PC-9 (cell line): ENCODE measurements at regions of chr1 and their contacts with region 1.

Region 1: DNA sequence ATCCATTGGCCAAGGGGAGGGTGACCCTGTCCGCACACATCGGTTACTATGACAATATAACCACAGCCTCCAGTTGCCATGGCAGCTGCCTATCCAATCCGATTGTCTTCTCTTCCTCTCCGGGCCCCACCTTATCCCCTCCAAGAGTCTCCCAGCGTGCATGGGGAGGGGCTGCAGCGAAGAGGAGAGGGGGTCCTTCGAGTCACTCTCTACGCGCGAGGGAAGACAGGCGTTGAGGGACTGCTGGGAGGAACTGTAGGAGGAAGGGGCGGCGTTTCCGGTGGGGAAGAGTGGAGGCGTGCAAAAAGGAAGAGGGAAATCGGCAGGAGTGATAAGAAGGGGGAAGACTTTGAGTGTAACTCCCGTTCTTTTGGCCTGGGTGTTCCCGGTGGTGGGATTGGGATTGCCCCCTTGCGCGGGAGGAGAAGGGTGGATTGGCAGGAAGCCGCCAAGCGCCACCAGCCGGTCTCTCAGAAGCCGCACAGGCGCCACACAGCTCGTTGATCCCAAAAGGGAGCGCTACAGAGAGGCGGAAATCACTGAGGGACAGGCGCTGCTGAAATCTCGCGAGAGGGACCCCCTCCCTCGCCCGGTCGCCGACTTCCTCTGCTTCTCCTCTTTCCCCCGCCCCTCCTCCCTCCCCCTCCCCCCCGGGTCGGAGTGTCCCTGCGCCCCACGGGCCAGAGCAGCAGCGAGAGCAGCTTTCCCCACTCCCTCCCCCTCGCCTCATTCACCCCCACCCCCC is 384 bp upstream of the SMG7 start:
- DNase-seq: peak; percentile 84 to 92
- H3K4me3 ChIP-seq: peak overlapping the region; percentile 82
- H3K27ac ChIP-seq: peak overlapping the region; percentile 94
- H3K4me1 ChIP-seq: peaks cover 59% of the 10 kb centered on the region
- H3K27me3 ChIP-seq: no peaks in the 10 kb centered on the region
- CTCF ChIP-seq: no peak; the same call in 1 of the 2 replicates

Region 2: GRCh38 chr1:183234660-183235476 is 237.0 kb before region 1 on chr1:
- CTCF ChIA-PET with region 1: no interaction called
- POLR2A ChIA-PET with region 1: no interaction called
- intact Hi-C with region 1: loop called (anchors 5 kb)
- DNase-seq: peak; percentile 81 to 96
- H3K4me3 ChIP-seq: peak overlapping the region; percentile 45; the same call in 1 of the 2 replicates
- H3K27ac ChIP-seq: peak overlapping the region; percentile 92
- H3K4me1 ChIP-seq: peaks cover 41% of the 10 kb centered on the region
- H3K27me3 ChIP-seq: no peaks in the 10 kb centered on the region
- CTCF ChIP-seq: peak; percentile 77

Region 3: DNA sequence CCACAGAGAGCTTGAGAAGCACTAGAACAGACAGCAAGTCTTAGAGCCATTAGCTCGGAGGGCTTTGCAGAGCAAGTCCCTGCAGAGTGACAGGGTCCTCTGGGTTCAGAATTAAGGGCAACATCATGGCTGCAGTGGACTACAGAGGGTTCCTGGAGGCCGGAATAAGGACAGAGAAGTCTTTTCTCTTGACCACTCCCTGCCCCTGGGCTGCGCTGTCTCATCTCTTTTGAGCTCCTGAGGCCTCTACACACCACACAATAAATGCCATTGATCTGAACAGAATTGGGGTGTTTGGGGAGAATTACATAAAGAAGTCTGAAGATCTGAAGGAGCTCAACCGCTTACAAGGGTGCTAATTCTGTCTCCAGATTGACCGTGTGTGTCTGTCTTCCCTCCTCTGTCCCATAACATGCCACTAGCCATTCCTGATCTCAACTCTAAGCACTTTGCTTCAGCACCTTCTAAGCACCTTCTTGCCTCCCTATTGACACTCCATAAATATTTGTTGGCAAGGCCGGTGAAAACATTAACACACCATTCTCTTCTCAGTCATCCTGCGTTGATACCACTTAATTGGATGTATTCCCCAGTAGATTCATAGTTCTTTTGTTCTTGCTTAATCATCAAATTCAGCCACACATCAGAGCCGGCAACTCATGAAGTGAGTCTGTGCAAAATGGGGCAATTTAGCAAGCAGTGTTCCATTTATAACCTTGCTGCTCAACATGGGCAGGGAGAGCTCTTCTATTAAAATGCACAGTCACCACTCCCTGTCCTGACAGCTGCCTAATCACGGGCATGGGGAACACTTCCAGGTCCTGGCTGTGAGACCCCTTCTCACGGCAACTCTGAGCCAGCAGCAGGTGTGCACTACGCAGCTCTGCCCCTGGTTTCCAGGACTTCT is 103.5 kb before region 1 on chr1:
- CTCF ChIA-PET with region 1: no interaction called
- POLR2A ChIA-PET with region 1: no interaction called
- intact Hi-C with region 1: loop called (anchors 2 kb)
- DNase-seq: no peak
- H3K4me3 ChIP-seq: no peak overlapping the region
- H3K27ac ChIP-seq: no peak overlapping the region
- H3K4me1 ChIP-seq: peaks cover 79% of the 10 kb centered on the region
- H3K27me3 ChIP-seq: no peaks in the 10 kb centered on the region
- CTCF ChIP-seq: no peak

Region 4: DNA sequence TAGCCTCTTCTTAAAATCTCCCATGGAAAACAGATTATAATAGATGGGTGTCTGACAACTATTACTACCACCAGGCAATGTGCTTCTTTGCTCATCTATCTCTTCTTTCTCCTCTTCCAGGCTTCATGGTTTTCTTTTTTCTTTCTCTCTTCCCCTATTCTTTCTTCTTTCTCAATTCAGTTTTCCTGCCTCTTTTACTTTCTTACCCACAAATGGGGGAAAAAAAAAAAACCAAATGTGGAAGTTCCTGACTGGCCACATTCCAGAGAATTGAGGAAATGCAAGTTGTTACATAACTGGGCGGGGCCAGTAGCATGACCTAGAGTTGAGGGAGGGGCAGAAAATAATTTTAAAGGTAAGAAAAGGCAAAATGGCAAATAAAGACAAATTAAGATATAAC is 10.6 kb before region 1 on chr1:
- CTCF ChIA-PET with region 1: interaction called, 3 read pairs
- POLR2A ChIA-PET with region 1: interaction called, 11 read pairs
- intact Hi-C with region 1: no loop called
- DNase-seq: peak; percentile 72 to 83
- H3K4me3 ChIP-seq: peak overlapping the region; percentile 6; the same call in 1 of the 2 replicates
- H3K27ac ChIP-seq: peak overlapping the region; percentile 90
- H3K4me1 ChIP-seq: peaks cover 36% of the 10 kb centered on the region
- H3K27me3 ChIP-seq: no peaks in the 10 kb centered on the region
- CTCF ChIP-seq: no peak

Region 5: DNA sequence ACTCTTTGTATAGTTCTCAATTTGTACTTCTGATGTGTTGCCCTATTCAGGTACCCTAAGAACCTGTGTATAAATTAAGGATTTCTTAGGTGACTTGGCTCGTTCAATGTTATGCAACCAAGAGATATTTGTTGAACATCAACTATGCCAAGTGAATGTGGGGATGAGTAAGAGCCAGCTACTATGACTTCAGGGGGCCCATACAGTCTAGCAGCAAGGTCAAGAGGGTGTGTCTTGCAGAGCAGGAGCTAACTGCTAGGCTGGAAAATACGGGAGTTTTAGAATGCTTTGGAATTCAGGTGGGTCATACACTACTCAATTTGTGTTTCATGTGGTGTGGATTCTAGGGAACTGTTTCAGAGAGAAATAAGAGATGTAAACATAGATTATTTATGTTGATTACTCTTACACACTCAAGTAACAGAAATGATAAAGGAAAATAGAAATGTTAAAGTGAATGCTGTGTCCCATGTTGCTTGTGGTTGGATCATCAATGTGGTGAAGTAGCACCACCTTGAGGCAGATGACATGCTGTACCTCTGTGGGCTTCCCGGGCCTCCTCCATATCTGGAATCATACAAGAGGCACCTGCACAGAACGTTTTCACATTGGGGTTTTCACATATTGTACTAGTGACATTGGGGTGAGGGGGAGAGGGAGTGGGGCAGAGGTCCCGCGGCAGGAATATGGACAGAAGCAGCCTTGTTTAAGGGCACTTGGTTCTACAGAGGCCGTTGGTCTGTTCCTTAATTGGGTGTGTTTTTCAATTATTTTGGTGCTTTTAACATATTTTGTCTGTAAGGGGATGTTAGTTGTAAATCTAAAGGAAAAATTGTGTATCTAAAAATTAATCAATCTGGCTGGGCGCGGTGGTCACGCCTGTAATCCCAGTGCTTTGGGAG is 151.2 kb after region 1 on chr1:
- CTCF ChIA-PET with region 1: no interaction called
- POLR2A ChIA-PET with region 1: no interaction called
- intact Hi-C with region 1: loop called (anchors 5 kb)
- DNase-seq: peak; percentile 60 to 65
- H3K4me3 ChIP-seq: no peak overlapping the region
- H3K27ac ChIP-seq: peak overlapping the region; percentile 64
- H3K4me1 ChIP-seq: peaks cover 33% of the 10 kb centered on the region
- H3K27me3 ChIP-seq: no peaks in the 10 kb centered on the region
- CTCF ChIP-seq: peak; percentile 87